Calu3 (cell line): ENCODE measurements at regions of chr4 and their contacts with region 1.

Region 1: DNA sequence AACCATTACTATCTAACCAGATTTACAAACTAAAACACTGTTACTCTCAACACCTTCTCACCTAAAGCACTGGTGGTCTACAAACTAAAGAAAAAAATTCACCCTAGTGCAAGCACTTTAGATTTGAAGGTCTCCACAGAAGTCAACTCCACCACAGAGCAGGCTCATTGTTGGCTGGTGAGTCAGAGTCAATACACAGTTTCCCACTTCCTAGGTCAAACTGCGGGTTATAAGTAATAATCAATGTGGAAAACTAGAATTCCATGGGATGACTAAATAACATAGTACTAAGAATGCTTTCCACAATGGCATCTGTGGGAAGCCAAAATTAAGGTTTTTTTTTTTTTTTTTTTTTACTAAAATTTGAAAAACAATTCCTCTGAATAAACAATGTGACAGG is 191.8 kb downstream of the PDGFC start:
- DNase-seq: peak; percentile 37
- H3K4me3 Mint-ChIP-seq: peak overlapping the region; percentile 50
- H3K27ac Mint-ChIP-seq: peak overlapping the region; percentile 74
- H3K4me1 Mint-ChIP-seq: peaks cover 47% of the 10 kb centered on the region
- H3K27me3 Mint-ChIP-seq: no peaks in the 10 kb centered on the region
- CTCF ChIP-seq: no peak

Region 2: GRCh38 chr4:156439576-156440200 is 340.1 kb before region 1 on chr4:
- CTCF ChIA-PET with region 1: no interaction called
- intact Hi-C with region 1: no loop called
- DNase-seq: no peak
- H3K4me3 Mint-ChIP-seq: no peak overlapping the region
- H3K27ac Mint-ChIP-seq: no peak overlapping the region
- H3K4me1 Mint-ChIP-seq: peaks cover 8% of the 10 kb centered on the region
- H3K27me3 Mint-ChIP-seq: no peaks in the 10 kb centered on the region
- CTCF ChIP-seq: no peak

Region 3: DNA sequence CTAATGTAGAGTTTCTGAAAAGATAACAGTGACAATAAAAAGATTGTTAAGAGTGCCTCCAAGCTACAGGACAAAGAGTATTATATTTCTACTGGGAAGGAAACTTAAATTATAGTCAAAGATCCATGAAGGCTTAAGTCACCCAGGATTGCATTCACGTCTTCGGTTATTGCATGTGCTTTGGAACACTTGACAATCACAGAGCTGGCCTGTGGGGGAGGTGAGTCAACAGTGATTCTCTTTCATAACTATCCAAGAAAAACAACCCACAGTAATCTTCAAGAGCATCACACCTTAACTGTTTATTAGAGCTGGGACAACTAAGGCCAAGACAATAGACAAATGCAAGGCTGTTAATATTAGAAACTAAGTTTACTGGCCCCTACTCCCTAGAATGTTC is 151.5 kb after region 1 on chr4:
- CTCF ChIA-PET with region 1: no interaction called
- intact Hi-C with region 1: loop called (anchors 5 kb)
- DNase-seq: peak; percentile 61
- H3K4me3 Mint-ChIP-seq: peak overlapping the region; percentile 45
- H3K27ac Mint-ChIP-seq: peak overlapping the region; percentile 98
- H3K4me1 Mint-ChIP-seq: peaks cover 11% of the 10 kb centered on the region
- H3K27me3 Mint-ChIP-seq: no peaks in the 10 kb centered on the region
- CTCF ChIP-seq: no peak

Region 4: DNA sequence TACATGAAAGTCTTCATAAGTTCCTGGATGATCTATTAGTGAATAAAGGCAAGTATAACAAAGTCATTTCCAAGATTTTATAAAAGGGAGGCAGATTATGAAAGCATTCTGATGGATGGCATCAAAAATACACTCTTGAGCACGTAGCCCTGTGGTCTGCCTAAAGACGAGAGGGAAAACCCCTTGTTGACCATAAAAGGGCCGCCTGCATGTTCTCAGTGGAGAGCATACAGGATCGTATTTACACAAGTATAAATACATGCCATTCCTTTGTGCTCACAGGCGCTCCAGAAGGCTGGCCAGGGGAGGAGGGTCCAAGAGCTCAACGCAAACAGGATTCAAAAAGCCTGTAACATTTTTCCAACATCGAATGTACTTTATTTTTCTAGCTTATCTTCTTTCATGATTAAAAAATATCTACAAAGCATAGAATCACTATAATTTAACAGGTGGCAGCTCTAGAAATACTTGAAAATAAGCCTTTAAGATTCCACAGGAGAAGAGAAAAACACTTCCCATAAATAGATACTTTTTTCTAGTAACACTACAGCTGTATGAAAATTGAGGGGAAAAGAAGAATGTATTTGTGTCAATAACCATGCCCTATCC is 162.3 kb after region 1 on chr4:
- CTCF ChIA-PET with region 1: no interaction called
- intact Hi-C with region 1: loop called (anchors 5 kb)
- DNase-seq: peak; percentile 77
- H3K4me3 Mint-ChIP-seq: peak overlapping the region; percentile 52
- H3K27ac Mint-ChIP-seq: peak overlapping the region; percentile 90
- H3K4me1 Mint-ChIP-seq: peaks cover 58% of the 10 kb centered on the region
- H3K27me3 Mint-ChIP-seq: no peaks in the 10 kb centered on the region
- CTCF ChIP-seq: no peak